B cell (primary cell): ENCODE measurements at regions of chr6 and their contacts with region 1.

Region 1: DNA sequence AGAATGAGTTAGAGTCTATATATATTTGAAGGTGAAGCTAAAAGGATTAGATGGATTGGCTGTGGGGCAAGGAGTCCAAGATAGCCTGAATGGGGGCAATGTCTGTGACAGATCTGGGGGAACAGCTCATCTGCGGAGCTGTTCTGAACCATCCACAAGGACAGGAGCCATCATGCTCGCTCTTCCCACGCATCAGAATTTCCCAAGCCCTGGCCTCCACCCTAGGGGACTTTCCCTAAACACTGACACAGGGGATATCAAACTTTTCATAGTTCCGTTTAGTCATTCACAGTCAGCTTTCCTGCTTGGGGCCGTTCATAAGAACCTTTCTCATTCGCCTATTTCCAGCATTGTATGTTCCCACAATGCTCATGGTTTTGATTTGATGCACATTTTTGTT is 37.6 kb upstream of the CCN6 start:
- DNase-seq: no peak
- ATAC-seq: no peak
- H3K4me3 ChIP-seq: no peak overlapping the region
- H3K4me3 Mint-ChIP-seq: no peak overlapping the region
- H3K27ac ChIP-seq: no peak overlapping the region
- H3K27ac Mint-ChIP-seq: no peak overlapping the region
- H3K4me1 ChIP-seq: no peaks in the 10 kb centered on the region
- H3K4me1 Mint-ChIP-seq: no peaks in the 10 kb centered on the region
- H3K27me3 ChIP-seq: no peaks in the 10 kb centered on the region
- H3K27me3 Mint-ChIP-seq: no peaks in the 10 kb centered on the region
- CTCF ChIP-seq: no peak

Region 2: DNA sequence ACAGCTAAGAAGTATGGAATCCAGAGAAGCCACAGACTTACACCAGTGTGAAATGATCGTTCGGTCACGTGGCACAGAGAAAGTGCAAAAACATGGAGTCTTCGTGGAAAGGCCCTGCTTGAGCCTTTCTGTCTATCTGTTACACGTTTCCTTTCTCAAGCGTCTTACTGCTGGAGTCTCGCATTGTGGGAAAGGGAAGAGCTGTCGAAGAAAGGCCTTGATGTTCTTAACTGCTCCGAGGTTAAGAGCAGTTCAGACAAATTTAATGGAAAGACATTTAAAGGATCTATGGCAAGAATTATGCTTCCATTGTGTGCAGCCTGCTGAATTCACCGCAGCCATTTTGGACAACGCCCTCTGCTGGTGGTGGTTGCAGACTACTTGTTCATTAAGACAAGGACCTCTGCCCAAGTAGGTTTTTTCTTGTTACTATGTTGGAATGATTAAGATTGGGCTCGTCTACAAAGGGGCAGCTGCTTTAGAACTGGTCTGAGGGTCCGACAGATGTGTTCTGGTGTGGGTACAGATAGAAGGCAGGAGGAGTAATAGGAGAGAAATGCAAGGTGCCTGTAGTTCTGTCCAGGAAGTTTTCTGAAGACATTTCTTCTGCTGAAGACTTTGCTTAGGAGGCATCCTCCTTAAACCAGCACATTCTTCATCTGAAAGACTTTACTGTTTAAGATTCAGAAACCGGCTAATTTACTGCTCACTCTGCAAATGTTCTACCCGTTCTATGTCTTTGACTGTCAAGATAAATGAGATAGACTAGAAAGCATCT is 12.9 kb after region 1 on chr6:
- CTCF ChIA-PET with region 1: interaction called, 16 read pairs
- POLR2A ChIA-PET with region 1: no interaction called
- intact Hi-C with region 1: no loop called
- DNase-seq: peak; percentile 71
- ATAC-seq: peak; percentile 39
- H3K4me3 ChIP-seq: no peak overlapping the region
- H3K4me3 Mint-ChIP-seq: no peak overlapping the region
- H3K27ac ChIP-seq: no peak overlapping the region
- H3K27ac Mint-ChIP-seq: no peak overlapping the region
- H3K4me1 ChIP-seq: peaks cover 10 to 13% of the 10 kb centered on the region in 2 donors
- H3K4me1 Mint-ChIP-seq: peaks cover 16% of the 10 kb centered on the region
- H3K27me3 ChIP-seq: no peaks in the 10 kb centered on the region
- H3K27me3 Mint-ChIP-seq: peaks cover 15% of the 10 kb centered on the region
- CTCF ChIP-seq: peak; percentile 79

Region 3: DNA sequence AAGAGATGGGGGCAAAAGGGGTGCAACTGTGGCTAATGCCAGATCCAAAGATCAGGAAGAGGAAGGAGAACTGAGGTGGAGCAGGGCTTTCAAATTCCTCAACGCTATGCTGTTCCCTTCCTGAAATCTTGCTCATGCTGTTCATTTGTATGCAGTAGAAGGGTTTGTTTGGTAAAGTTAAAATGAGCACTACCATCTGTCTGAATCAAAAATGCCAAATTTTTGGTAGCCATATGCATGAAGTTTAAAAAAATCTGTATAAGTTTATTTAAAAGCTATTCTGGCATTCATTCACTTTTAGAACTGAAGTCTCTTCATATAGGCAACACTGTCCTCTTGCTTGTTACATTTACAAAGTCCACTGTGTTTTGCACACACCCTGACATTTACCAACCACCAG is 153.2 kb after region 1 on chr6:
- CTCF ChIA-PET with region 1: no interaction called
- POLR2A ChIA-PET with region 1: no interaction called
- intact Hi-C with region 1: no loop called
- DNase-seq: no peak
- ATAC-seq: no peak
- H3K4me3 ChIP-seq: no peak overlapping the region
- H3K4me3 Mint-ChIP-seq: no peak overlapping the region
- H3K27ac ChIP-seq: no peak overlapping the region
- H3K27ac Mint-ChIP-seq: no peak overlapping the region
- H3K4me1 ChIP-seq: no peaks in the 10 kb centered on the region
- H3K4me1 Mint-ChIP-seq: no peaks in the 10 kb centered on the region
- H3K27me3 ChIP-seq: peaks cover 0 to 10% (median 3%) of the 10 kb centered on the region in 4 experiments
- H3K27me3 Mint-ChIP-seq: peaks cover 28% of the 10 kb centered on the region
- CTCF ChIP-seq: no peak